Tibial artery (tissue), 4 donors: ENCODE measurements at regions of chr20 and their contacts with region 1.

Region 1: GRCh38 chr20:50484276-50484976 is 25.8 kb upstream of the PTPN1 start:
- DNase-seq: no peak
- H3K4me3 ChIP-seq: peak overlapping the region; percentile 50 to 52
- H3K27ac ChIP-seq: peak overlapping the region; percentile 75 to 77
- H3K4me1 ChIP-seq: peaks cover 0 to 8% (median 2%) of the 10 kb centered on the region in 4 donors
- H3K27me3 ChIP-seq: no peaks in the 10 kb centered on the region
- CTCF ChIP-seq: no peak

Region 2: GRCh38 chr20:50267041-50267865 is 217.2 kb before region 1 on chr20:
- intact Hi-C with region 1: no loop called
- DNase-seq: peak; percentile 81 to 86
- H3K4me3 ChIP-seq: no peak overlapping the region
- H3K27ac ChIP-seq: peak overlapping the region; percentile 11 to 18
- H3K4me1 ChIP-seq: peaks cover 0 to 18% (median 5%) of the 10 kb centered on the region in 4 donors
- H3K27me3 ChIP-seq: no peaks in the 10 kb centered on the region
- CTCF ChIP-seq: no peak

Region 3: DNA sequence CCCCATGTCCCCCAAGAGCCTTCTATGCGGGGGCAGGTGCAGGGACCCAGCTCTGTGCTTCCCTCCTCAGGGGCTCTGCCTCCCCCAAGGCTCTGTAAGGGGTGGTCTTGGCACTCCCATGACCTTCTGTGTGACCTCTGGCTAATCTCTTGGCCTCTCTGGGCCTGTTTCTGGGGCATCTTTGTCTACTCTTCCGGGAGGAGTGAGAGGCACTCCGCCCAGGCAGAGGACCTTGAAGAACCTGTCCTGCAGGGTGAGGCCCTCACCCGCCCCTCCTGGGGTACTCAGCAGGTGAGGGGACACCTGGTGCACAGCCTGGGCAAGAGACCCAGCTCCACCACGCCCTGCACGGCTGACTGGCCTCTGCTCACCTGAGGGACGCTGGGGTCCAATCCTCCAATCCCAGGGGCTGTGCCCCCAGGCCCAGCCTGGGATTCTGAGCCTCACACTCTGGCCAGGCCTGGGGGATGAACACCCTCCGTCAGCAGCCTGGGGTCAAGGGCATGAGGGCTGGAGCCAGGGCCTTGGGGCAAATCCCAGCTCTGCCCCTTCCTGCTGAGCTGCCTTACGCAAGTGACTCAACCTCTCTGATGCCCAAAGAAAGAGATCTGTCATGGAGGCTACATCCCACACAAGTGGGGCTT is 124.3 kb before region 1 on chr20:
- intact Hi-C with region 1: no loop called
- DNase-seq: no peak
- H3K4me3 ChIP-seq: no peak overlapping the region
- H3K27ac ChIP-seq: no peak overlapping the region
- H3K4me1 ChIP-seq: peaks cover 0 to 5% (median 0%) of the 10 kb centered on the region in 4 donors
- H3K27me3 ChIP-seq: no peaks in the 10 kb centered on the region
- CTCF ChIP-seq: no peak

Region 4: GRCh38 chr20:50731055-50731871 is 246.8 kb after region 1 on chr20 and contains the start of gene PARD6B:
- intact Hi-C with region 1: loop called (anchors 10 kb)
- DNase-seq: peak; percentile 94 to 98
- H3K4me3 ChIP-seq: peak within 1 kb of the TSS; percentile 83 to 94
- H3K27ac ChIP-seq: peak within 1 kb of the TSS; percentile 86 to 89
- H3K4me1 ChIP-seq: peaks cover 4 to 30% (median 22%) of the 10 kb centered on the region in 4 donors
- H3K27me3 ChIP-seq: no peaks in the 10 kb centered on the region
- CTCF ChIP-seq: no peak